GM13976 (cell line): ENCODE measurements at regions of chr13 and their contacts with region 1.

Region 1: DNA sequence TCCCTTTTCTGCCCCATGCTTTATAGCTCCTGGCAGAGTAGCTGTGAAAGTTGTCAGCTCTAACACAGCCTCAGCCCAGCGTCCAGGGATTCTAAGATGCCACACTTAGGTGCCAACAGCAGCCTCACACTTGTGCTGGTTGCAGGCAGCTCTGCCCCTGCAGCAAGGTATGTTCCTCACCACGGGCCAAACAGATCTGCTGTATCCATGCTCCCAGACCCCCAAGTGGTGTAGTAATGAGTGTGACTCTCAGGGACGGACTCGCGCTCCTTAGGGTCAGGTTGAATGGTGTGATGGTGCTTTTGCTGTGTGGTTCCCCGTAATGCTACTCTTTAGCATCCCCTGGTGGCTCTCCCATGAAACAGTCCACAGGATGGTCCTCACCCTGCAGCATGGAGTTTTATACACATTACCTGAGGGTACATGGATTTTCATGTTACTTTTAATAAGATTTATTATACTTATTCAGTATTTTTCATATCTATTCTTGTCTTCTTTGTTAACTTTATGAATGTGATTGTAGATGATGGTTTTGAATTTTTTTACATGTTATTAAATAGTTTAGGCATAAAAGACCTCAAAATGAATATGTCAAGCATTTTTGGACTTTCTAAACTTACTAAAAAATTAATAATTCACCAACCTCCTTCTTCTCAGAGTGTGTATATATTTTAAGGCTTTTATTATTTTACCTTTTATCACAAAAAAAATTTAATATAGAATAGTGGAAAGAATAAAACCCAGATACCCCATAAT is 232.5 kb downstream of the SLC7A1 start:
- DNase-seq: peak; percentile 76
- CTCF ChIP-seq: peak; percentile 89

Region 2: DNA sequence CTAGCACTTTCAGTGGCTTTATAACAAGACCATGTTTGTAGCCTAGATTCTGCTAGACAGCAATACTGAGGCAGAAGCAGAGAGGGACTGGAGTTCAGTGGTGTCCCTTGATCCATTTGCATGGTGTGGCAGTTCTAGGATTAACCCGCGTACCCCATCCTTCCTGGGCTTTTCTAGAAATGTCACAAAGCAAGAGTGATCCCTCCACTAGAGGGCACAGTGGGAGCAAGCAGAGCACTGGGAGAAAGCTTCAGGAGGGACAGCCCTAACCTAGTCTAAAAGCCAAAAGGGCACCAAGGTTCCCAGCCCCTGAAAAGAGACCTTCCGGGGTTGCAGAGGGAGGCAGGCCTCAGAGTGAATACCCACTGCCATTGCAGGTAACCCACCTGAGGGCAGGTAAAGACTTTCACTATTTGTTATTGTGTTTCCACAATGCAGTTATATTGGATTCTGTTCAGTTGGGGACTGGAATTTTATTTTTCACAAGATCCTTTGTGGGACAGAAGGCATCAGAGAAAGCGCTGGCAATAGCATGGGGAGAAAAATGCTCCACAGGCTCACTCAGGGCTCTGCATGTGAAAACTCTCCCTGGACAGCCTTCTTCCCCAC is 1038.7 kb before region 1 on chr13:
- in situ Hi-C with region 1: loop called (anchors 25 kb)
- DNase-seq: peak; percentile 80
- CTCF ChIP-seq: peak; percentile 73

Region 3: DNA sequence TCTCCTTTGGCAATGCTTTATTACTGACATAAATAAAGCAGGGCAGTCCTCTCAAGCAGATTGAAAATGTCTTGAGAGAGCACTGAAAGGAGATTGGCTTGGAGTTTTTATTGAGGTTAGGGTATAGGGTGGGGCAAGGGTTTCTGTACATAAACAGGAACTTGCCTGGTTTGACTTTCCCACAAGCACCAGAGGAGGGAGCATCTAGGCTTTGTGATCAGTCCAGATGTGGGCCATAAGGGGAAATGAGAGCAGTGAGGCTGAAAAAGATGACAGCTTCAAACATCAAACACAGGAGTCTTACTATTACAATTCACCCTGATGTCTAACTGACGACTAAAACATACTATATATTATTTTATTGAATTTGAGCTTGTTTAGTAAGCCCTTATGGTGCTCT is 282.0 kb before region 1 on chr13:
- in situ Hi-C with region 1: loop called (anchors 25 kb)
- DNase-seq: peak; percentile 42
- CTCF ChIP-seq: peak; percentile 55